ENCODE measurements at regions of chr3 and their contacts with region 1.

Region 1: DNA sequence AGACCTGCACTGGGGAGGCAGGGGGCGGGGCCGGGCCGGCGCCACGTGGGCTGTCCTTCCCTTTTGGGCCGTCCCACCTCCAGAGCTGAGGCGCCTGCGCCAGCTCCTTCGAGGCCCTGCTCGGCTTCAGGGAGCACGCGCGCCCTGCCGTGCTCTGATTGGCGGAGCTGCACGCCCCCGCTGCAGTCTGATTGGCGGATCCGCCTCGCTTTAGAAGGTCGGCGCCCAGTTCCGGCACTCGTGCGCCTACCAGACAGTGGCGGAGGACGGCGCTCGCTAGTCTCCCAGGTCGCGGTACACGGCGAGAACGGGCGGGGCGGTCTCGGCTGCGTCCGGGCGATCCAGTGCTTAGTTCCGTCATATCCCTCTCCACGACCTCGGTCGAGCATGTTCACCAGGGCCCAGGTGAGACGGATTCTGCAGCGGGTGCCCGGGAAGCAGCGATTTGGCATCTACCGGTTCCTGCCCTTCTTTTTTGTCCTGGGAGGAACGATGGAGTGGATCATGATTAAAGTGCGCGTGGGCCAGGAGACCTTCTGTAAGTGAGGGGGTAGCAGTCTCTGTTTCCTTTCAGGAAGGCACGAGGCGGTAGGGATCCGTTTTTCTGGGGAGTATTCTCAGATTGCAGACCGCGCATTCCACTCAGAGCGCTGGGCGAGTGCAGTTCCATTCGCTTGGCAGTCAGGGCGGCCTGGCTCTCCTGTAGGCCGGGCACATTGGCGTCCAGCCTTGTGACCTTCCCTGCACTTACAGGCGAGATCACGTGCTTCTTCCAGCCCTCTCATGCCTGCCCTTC is at the start of gene UQCC5:
- DNase-seq: peak; percentile 97 to 98
- ATAC-seq: peak; percentile 80 to 85
- H3K4me3 ChIP-seq: peak within 1 kb of the TSS; percentile 63 to 91 (median 77)
- H3K27ac ChIP-seq: peak within 1 kb of the TSS; percentile 88 to 99 (median 94)
- H3K4me1 ChIP-seq: peaks cover 57 to 58% of the 10 kb centered on the region in 2 donors
- H3K27me3 ChIP-seq: no peaks in the 10 kb centered on the region
- CTCF ChIP-seq: peak in 1 of 5 experiments; percentile 22
- POLR2A ChIP-seq: peak; percentile 100
- total RNA-seq, gene UQCC5: 0.31 to 26.1 (median 0.87) TPM

Region 2: DNA sequence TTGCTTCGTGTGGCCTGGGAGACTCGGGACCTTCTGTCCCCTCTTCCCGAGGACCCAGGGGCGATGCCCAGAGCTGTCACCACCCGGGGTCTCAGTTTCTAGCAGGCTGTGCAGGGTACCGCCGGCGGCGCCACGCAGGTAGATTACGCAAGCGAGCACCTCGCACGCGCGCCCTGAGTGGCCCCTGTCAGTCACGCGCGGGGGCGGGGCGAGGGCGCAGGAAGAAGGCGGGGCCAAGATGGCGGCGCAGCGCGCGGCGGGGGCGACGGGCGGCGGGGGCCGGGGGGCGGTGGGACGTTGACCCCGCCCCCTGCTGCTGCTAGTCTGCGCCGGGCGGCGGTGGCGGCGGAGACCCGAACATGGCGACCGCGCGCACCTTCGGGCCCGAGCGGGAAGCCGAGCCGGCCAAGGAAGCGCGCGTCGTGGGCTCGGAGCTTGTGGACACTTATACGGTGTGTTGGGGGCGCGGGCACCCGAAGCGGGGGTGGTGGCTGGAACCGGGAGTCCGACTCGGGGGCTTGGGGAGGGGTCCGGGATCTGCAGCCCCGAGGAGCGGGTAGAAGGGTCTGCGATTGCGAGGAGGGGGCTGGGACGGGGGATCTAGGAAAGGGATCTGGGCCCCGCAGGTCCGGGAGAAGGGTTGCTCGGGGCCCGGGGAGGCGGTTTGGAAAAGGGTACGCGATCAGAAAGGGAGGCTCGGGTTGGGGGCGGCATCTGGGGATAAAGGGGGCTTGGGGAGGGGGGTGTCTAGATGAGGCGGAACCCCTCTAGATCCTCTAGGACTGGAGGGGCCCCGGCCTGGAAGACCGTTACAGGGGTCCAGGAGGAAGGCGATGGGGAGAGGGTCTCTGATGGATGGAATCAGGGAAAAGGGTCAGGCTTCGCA is 81.0 kb before region 1 on chr3 and contains the start of gene NISCH:
- in situ Hi-C with region 1: loop called in 1 of 4 experiments (anchors 10 kb)
- intact Hi-C with region 1: loop called (anchors 5 kb)
- DNase-seq: peak; percentile 82 to 90
- ATAC-seq: peak; percentile 43 to 61
- H3K4me3 ChIP-seq: peak within 1 kb of the TSS; percentile 73 to 95 (median 86)
- H3K27ac ChIP-seq: peak within 1 kb of the TSS; percentile 94 to 99 (median 97)
- H3K4me1 ChIP-seq: peaks cover 38 to 39% of the 10 kb centered on the region in 2 donors
- H3K27me3 ChIP-seq: no peaks in the 10 kb centered on the region
- CTCF ChIP-seq: no peak
- POLR2A ChIP-seq: peak; percentile 73 to 76
- total RNA-seq, gene NISCH: 19.2 to 38.3 (median 25.0) TPM

Region 3: DNA sequence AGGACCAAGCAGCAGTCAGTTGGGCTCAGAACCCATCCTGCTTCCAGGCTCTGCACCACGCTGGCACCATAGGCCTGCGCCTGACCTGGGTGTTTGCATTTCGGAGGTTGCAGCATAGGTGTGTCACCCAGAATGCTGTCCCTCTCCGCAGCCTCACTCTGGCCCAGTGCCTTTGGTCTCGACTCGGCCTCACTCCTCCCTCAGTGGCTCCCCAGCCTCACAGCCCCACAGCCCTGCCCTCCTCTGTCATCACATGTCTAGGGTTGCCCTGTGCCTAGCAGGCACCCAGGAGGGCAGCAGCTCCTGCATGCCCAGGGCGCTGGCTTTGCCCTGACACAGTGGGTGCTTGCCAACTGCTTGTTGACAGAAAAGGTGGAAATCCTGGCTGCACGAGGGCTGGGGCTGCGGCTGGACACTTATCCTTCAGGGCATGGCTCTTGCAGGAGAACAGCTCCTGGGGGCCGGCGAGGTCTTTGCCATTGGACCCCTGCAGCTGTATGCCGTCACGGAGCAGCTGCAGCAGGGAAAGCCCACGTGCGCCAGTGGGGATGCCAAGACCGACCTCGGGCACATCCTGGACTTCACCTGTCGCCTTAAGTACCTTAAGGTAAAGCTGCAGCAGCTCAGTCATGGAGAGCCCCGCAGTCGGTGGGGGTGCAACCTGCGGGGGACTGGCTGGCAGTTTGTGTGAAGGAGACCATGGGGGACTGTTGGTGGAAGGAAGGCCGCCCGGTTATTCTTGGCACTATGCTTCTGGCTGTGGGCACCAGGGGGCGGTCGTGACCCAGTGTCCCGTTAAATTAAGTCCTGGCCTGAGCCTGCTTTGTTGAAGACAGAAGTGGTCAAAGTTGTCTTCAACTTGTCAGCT is 65.0 kb before region 1 on chr3:
- in situ Hi-C with region 1: loop called in 1 of 4 experiments (anchors 10 kb)
- intact Hi-C with region 1: loop called (anchors 1 kb)
- DNase-seq: peak; percentile 62 to 91
- ATAC-seq: peak; percentile 49 to 78
- H3K4me3 ChIP-seq: no peak overlapping the region
- H3K27ac ChIP-seq: peak overlapping the region; percentile 69 to 85 (median 78)
- H3K4me1 ChIP-seq: peaks cover 33 to 52% of the 10 kb centered on the region in 2 donors
- H3K27me3 ChIP-seq: no peaks in the 10 kb centered on the region
- CTCF ChIP-seq: peak; percentile 77 to 88 (median 83)
- POLR2A ChIP-seq: peak in 1 of 2 donors; percentile 26

Region 4: GRCh38 chr3:52483577-52484381 is 52.8 kb before region 1 on chr3:
- in situ Hi-C with region 1: no loop called
- intact Hi-C with region 1: loop called (anchors 2 kb)
- DNase-seq: peak in 1 of 2 donors; percentile 70
- ATAC-seq: peak; percentile 78 to 79
- H3K4me3 ChIP-seq: no peak overlapping the region
- H3K27ac ChIP-seq: peak overlapping the region; percentile 77 to 86 (median 83)
- H3K4me1 ChIP-seq: peaks cover 21 to 22% of the 10 kb centered on the region in 2 donors
- H3K27me3 ChIP-seq: no peaks in the 10 kb centered on the region
- CTCF ChIP-seq: no peak
- POLR2A ChIP-seq: no peak

Region 5: GRCh38 chr3:52493232-52494017 is 43.1 kb before region 1 on chr3:
- in situ Hi-C with region 1: no loop called
- intact Hi-C with region 1: loop called (anchors 2 kb)
- DNase-seq: peak in 1 of 2 donors; percentile 82
- ATAC-seq: peak in 1 of 2 donors; percentile 64
- H3K4me3 ChIP-seq: no peak overlapping the region
- H3K27ac ChIP-seq: peak overlapping the region; percentile 26 to 61 (median 32)
- H3K4me1 ChIP-seq: peaks cover 37 to 42% of the 10 kb centered on the region in 2 donors
- H3K27me3 ChIP-seq: no peaks in the 10 kb centered on the region
- CTCF ChIP-seq: no peak
- POLR2A ChIP-seq: no peak

Region 6: DNA sequence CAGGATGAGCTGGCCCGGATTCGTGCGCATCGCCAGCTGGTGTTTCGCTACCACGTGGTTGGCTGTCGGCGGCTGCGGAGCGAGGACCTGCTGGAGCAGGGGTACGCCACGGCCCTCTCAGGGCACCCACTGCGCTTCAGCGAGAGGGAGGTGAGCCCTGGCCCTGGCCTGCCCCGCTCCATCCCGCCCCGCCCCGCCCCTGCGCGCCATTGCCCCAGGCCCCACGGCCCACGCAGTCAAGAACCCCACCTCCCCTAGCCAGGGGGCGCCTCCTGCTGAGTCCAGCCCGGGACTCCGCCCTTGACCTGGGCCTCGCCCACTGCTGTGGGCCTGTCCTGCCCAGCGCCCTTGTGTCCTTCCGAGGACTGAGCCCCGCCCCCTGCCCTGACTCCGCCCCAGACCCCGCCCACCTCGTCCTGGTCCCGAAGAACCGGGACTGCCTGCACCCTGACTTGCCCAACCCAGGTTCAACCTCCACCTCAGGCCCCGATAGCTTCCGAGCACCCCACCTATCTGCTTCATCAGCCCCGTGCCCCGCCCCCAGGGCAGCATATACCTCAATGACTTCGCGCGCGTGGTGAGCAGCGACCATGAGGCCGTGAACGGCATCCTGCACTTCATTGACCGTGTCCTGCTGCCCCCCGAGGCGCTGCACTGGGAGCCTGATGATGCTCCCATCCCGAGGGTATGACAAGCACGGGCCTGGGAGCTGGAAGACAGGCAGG is 17.7 kb before region 1 on chr3:
- in situ Hi-C with region 1: no loop called
- intact Hi-C with region 1: no loop called
- DNase-seq: peak in 1 of 2 donors; percentile 39
- ATAC-seq: peak in 1 of 2 donors; percentile 43
- H3K4me3 ChIP-seq: peak overlapping the region; percentile 31 to 41 (median 39)
- H3K27ac ChIP-seq: no peak overlapping the region
- H3K4me1 ChIP-seq: no peaks in the 10 kb centered on the region
- H3K27me3 ChIP-seq: no peaks in the 10 kb centered on the region
- CTCF ChIP-seq: no peak
- POLR2A ChIP-seq: no peak

Region 7: DNA sequence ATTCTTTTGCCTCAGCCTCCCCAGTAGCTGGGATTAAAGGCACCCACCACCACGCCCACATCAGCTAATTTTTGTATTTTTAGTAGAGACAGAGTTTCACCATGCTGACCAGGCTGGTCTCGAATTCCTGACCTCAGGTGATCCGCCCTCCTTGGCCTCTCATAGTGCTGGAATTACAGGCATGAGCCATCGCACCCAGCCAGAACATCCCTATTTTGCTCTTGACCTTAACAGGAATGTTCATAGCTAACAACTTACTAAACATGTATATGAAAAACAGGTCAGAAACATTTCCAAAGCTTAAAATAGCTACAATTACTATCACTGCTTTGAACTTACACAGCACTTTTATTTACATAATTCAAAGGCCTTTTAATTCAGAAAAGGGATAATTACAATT is 33.5 kb after region 1 on chr3:
- in situ Hi-C with region 1: no loop called
- intact Hi-C with region 1: no loop called
- DNase-seq: no peak
- ATAC-seq: no peak
- H3K4me3 ChIP-seq: no peak overlapping the region
- H3K27ac ChIP-seq: no peak overlapping the region
- H3K4me1 ChIP-seq: peaks cover 0 to 4% of the 10 kb centered on the region in 2 donors
- H3K27me3 ChIP-seq: no peaks in the 10 kb centered on the region
- CTCF ChIP-seq: no peak
- POLR2A ChIP-seq: no peak

Region 8: GRCh38 chr3:52831500-52832301 is 295.1 kb after region 1 on chr3:
- in situ Hi-C with region 1: no loop called
- intact Hi-C with region 1: loop called (anchors 5 kb)
- DNase-seq: peak; percentile 90 to 95
- ATAC-seq: peak; percentile 51 to 53
- H3K4me3 ChIP-seq: peak overlapping the region in 3 of 4 donors; percentile 3 to 36 (median 15)
- H3K27ac ChIP-seq: peak overlapping the region; percentile 96 to 98 (median 97)
- H3K4me1 ChIP-seq: peaks cover 60 to 66% of the 10 kb centered on the region in 2 donors
- H3K27me3 ChIP-seq: no peaks in the 10 kb centered on the region
- CTCF ChIP-seq: no peak
- POLR2A ChIP-seq: peak; percentile 54 to 66